Activated CD8-positive, alpha-beta memory T cell treated with anti-CD3 and anti-CD28 coated beads, Interleukin-2, amount 10 ng/mL, durations not matched to agents 7 days and 5 days (primary cell): ENCODE measurements at regions of chrX and their contacts with region 1.

Region 1: DNA sequence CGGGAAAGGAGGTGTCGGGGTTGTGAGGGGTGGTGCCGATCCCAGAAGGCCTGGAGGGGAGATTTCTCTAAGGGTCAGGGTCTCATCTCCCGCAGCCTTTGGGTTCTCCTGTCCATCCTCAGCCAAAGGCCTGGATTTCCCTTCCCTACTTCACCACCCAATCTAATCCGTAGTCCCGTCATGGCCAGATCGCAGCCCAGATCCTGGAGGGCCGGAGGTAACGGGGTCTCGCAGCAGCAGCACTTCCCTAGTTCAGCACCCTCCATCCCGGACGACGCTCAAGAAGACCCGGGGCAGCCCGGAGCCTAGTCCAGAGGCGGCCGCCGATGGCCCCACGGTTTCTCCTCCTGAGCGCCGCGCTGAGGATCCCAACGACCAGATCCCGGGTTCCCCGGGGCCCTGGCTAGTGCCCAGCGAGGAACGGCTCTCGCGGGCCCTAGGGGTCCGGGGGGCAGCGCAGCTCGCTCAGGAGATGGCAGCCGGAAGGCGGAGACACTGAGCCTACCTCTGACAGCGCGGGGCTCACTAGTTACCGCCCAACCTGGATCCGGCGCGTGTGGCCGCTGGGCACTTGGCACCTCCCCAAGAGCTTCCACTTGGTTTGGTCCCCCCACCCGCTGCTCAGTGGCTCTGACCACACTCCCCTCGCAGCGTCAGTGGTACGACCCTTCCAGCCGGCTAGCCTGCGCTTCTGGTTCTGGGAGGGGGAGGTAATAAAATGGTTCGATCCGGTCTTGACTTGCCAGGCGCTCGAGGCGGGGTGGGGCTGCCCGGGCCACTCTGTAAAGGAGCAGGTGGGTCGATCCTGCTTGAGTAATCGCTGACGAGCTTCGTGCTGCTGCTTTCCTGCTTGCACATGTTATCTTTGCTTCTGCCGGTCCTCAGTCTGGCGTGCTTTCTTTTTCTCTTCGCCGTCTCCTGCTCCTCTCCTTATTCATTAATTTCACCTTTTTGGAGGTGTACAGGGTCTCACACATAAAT is 3.6 kb downstream of the MAGIX start:
- DNase-seq: peak; percentile 86
- ATAC-seq: peak; percentile 52
- H3K4me3 Mint-ChIP-seq: peak overlapping the region; percentile 81
- H3K27ac Mint-ChIP-seq: peak overlapping the region; percentile 96
- H3K4me1 Mint-ChIP-seq: peaks cover 38% of the 10 kb centered on the region
- H3K27me3 Mint-ChIP-seq: no peaks in the 10 kb centered on the region

Region 2: DNA sequence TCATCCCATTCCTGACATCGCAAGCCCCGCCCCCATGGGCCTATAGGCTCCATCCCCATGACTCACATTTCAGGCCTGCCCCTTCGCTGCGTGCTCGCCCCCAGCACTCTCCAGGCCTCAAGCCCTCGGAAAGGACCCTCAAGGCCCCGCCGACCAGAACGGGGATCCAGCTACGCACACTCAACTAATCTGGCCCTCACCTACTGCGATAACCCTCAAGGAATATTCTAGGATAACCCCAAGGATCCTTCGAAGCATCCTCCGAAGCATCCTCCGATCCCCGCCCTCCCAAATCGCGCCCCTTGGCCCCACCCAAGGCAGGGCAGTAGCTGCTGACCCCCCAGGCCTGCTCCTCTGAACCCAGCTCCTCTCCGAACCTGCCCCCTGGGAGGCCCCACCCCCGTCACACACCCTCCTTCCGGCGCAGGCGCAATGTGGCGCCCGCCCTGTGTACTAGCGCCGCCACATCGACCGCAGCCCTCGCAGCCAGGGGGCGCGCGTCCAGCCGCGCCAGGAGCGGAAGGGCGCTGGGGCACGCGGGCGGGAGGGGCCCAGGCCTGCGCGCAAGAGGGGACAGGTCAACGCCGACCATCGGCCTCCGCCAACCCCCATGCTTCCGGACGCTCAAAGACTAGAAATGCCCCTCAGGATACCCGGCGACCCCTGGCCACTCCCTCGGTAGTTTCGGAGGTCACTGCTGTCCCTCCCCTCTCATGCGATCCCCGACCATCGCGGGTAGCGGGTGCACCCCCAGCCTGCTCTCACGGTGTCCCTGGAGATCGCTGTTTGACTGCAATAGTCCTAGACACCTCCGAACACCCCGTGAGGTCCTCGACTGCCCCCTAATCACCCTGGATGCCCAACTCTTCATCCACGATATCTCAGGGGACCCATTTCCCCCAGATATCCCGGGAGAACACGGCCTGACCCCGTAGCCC is 10.0 kb before region 1 on chrX:
- CTCF ChIA-PET with region 1: interaction called, 13 read pairs
- DNase-seq: peak; percentile 91
- ATAC-seq: peak; percentile 92
- H3K4me3 Mint-ChIP-seq: peak overlapping the region; percentile 90
- H3K27ac Mint-ChIP-seq: peak overlapping the region; percentile 96
- H3K4me1 Mint-ChIP-seq: peaks cover 16% of the 10 kb centered on the region
- H3K27me3 Mint-ChIP-seq: no peaks in the 10 kb centered on the region

Region 3: DNA sequence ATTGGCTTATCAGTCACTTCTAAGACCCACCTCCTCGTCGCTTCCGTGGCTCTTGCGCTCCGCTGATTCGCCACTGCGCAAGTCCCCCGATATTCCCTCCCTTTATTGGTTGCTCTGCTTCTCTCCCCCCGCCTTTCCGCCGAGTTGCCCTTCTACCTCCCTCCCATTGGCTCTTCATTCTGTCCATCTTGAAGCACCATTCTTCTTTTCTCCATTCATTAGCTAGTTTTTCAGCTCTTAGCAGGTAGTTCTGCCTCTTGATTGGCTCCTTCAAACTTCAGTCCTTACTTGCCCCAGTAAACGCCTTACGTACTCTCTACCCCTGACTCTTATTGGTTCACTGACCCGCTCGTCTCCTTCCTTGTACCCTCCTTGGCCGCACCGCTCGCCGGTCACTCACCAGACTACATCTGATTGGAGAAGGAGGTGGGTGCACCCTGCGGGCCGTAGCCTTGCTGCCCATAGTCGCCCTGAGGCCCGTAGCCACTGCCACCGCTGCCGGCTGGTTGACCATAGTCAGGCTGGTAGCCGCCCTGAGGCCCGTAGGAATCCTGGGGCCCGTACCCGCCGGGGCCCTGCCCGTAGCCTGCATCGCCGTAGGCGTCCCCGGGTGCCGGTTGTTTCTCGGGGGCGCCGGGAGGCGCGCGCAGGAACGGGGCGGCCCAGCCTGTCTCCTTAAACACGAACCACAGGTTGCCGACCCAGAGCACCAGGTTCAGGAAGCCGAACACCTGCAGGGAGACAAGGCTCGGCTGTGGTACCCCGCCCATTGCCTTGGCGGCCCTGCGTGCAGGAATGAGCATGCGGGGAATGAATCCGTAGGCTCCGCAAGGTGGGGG is 25.1 kb after region 1 on chrX:
- CTCF ChIA-PET with region 1: interaction called, 31 read pairs
- DNase-seq: peak; percentile 94
- ATAC-seq: peak; percentile 93
- H3K4me3 Mint-ChIP-seq: peak overlapping the region; percentile 97
- H3K27ac Mint-ChIP-seq: peak overlapping the region; percentile 97
- H3K4me1 Mint-ChIP-seq: peaks cover 34% of the 10 kb centered on the region
- H3K27me3 Mint-ChIP-seq: no peaks in the 10 kb centered on the region